Activated T-helper 1 cell treated with anti-CD3 and anti-CD28 coated beads, Interleukin-12 subunit alpha, Interleukin-12 subunit beta, Interleukin-2, Interleukin-4 antibody, amounts not matched to agents 30 ng/mL and 10 ng/mL and 1 ng/mL, durations not matched to agents 14 hours and 24 hours and 36 hours (primary cell): ENCODE measurements at regions of chr7 and their contacts with region 1.

Region 1: GRCh38 chr7:98841179-98841997 is 28.4 kb downstream of the TMEM130 start:
- DNase-seq: peak; percentile 38
- H3K4me3 Mint-ChIP-seq: no peak overlapping the region
- H3K27ac Mint-ChIP-seq: no peak overlapping the region
- H3K4me1 Mint-ChIP-seq: no peaks in the 10 kb centered on the region
- H3K27me3 Mint-ChIP-seq: no peaks in the 10 kb centered on the region

Region 2: GRCh38 chr7:98434095-98434494 is 407.3 kb before region 1 on chr7:
- intact Hi-C with region 1: loop called (anchors 1 kb)
- DNase-seq: no peak
- H3K4me3 Mint-ChIP-seq: no peak overlapping the region
- H3K27ac Mint-ChIP-seq: no peak overlapping the region
- H3K4me1 Mint-ChIP-seq: no peaks in the 10 kb centered on the region
- H3K27me3 Mint-ChIP-seq: no peaks in the 10 kb centered on the region

Region 3: DNA sequence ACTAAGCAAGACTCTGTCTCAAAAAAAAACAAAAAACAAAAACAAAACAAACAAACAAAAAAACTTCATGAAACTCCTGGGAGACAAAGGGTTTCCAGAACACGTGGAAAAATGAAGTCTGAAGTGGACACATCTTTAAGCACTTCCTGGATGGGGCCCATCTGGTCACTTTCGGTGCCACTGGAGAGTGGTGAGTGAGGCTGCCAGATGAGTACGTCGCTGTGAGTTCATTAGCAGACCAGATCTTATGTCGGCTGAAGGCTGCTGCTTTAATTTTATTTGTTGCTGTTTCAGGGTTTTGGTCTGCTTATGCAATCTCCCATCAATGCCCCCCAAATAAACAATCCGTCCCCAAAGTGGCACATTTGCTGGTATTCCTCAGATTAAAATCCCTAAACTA is 159.9 kb before region 1 on chr7:
- intact Hi-C with region 1: no loop called
- DNase-seq: no peak
- H3K4me3 Mint-ChIP-seq: no peak overlapping the region
- H3K27ac Mint-ChIP-seq: no peak overlapping the region
- H3K4me1 Mint-ChIP-seq: no peaks in the 10 kb centered on the region
- H3K27me3 Mint-ChIP-seq: peaks cover 3% of the 10 kb centered on the region

Region 4: DNA sequence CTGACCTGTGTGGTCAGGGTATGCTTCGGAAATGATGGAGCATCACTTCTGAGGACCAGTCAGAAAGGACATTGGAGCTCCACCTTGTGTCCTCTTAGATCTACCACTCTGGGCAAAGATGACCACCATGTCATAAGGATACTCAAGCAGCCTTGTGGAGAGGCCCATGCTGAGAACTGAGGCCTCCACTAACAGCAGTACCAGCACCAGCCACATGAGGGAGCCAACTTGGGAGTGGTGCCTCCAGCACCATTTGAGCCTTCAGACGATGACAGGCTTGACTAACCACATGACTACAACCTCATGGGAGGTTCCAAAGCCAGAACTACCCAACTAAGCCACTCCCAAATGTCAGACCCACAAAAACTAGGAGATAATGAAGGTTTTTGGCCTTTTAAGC is 108.4 kb before region 1 on chr7:
- intact Hi-C with region 1: loop called (anchors 1 kb)
- DNase-seq: peak; percentile 4
- H3K4me3 Mint-ChIP-seq: no peak overlapping the region
- H3K27ac Mint-ChIP-seq: no peak overlapping the region
- H3K4me1 Mint-ChIP-seq: no peaks in the 10 kb centered on the region
- H3K27me3 Mint-ChIP-seq: peaks cover 7% of the 10 kb centered on the region

Region 5: GRCh38 chr7:98745722-98746318 is 95.6 kb before region 1 on chr7:
- intact Hi-C with region 1: loop called (anchors 2 kb)
- DNase-seq: peak; percentile 42
- H3K4me3 Mint-ChIP-seq: no peak overlapping the region
- H3K27ac Mint-ChIP-seq: no peak overlapping the region
- H3K4me1 Mint-ChIP-seq: no peaks in the 10 kb centered on the region
- H3K27me3 Mint-ChIP-seq: peaks cover 4% of the 10 kb centered on the region

Region 6: GRCh38 chr7:98864731-98865453 is 23.5 kb after region 1 on chr7:
- intact Hi-C with region 1: no loop called
- DNase-seq: no peak
- H3K4me3 Mint-ChIP-seq: no peak overlapping the region
- H3K27ac Mint-ChIP-seq: no peak overlapping the region
- H3K4me1 Mint-ChIP-seq: no peaks in the 10 kb centered on the region
- H3K27me3 Mint-ChIP-seq: peaks cover 35% of the 10 kb centered on the region